ENCODE measurements at regions of chr18 and their contacts with region 1.

Region 1: GRCh38 chr18:7272311-7273049 is 41.6 kb downstream of the LRRC30 start:
- DNase-seq: peak; percentile 78 to 86
- ATAC-seq: peak; percentile 86
- H3K4me3 ChIP-seq: no peak overlapping the region
- H3K27ac ChIP-seq: no peak overlapping the region
- H3K4me1 ChIP-seq: no peaks in the 10 kb centered on the region
- H3K27me3 ChIP-seq: no peaks in the 10 kb centered on the region

Region 2: GRCh38 chr18:7755753-7756475 is 483.4 kb after region 1 on chr18:
- intact Hi-C with region 1: loop called in 1 of 2 experiments (anchors 10 kb)
- DNase-seq: no peak
- ATAC-seq: peak; percentile 39
- H3K4me3 ChIP-seq: no peak overlapping the region
- H3K27ac ChIP-seq: no peak overlapping the region
- H3K4me1 ChIP-seq: peaks cover 0 to 2% of the 10 kb centered on the region in 2 donors
- H3K27me3 ChIP-seq: no peaks in the 10 kb centered on the region

Measured in aorta (tissue), 5 donors.